ENCODE measurements at regions of chr9 and their contacts with region 1.

Region 1: DNA sequence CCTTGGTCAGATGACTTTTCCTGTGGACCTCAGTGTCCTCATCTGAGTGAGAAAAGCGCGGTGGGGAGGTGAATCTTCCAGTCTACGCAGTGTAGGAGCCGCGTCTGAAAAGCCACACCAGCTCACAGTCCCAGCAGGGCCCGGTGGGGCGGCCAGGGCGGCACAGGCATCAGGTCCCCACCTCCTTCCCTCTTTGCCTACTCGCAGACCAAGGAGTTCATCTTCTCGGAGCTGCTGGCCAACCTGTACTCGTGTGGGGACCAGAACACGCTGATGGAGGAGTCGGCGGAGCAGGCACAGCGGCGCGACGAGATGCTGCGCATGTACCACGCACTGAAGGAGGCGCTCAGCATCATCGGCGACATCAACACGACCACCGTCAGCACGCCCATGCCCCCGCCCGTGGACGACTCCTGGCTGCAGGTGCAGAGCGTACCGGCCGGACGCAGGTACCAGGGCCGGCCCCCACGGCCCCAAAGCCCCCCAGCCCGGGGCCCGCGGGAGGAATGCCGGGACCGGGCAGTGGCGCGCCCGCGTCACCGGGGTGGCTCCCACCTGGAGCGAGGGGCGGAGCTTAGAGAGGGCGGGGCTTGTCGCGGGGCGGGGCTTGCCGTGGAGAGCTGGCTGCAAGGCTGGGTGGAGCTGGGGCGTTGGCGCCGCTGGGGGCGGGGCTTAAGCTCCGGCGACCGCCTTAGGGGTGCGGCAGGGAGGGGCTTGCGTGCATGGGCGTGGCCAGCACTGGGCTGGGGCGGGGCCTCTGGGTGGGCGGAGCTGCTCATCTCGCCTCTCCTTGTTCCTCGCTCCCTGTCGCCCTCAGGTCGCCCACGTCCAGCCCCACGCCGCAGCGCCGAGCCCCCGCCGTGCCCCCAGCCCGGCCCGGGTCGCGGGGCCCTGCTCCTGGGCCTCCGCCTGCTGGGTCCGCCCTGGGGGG is 25.6 kb downstream of the GOLGA2 start:
- DNase-seq: peak; percentile 81 to 93
- ATAC-seq: peak; percentile 82 to 94 (median 90)
- H3K4me3 ChIP-seq: peak overlapping the region; percentile 44
- H3K27ac ChIP-seq: no peak overlapping the region
- H3K4me1 ChIP-seq: no peaks in the 10 kb centered on the region
- H3K27me3 ChIP-seq: peaks cover 0 to 21% (median 11%) of the 10 kb centered on the region in 3 donors
- CTCF ChIP-seq: no peak

Region 2: GRCh38 chr9:128191406-128192046 is 58.6 kb before region 1 on chr9 and contains the start of gene CIZ1:
- intact Hi-C with region 1: no loop called
- DNase-seq: peak; percentile 84 to 90
- ATAC-seq: peak; percentile 84 to 91 (median 88)
- H3K4me3 ChIP-seq: peak within 1 kb of the TSS; percentile 89
- H3K27ac ChIP-seq: peak within 1 kb of the TSS; percentile 90
- H3K4me1 ChIP-seq: peaks cover 16% of the 10 kb centered on the region
- H3K27me3 ChIP-seq: no peaks in the 10 kb centered on the region
- CTCF ChIP-seq: peak; percentile 74
- total RNA-seq, gene CIZ1: 86.0 to 119 (median 109) TPM

Region 3: GRCh38 chr9:128304149-128304974 is 54.2 kb after region 1 on chr9:
- intact Hi-C with region 1: loop called in 1 of 2 experiments (anchors 10 kb)
- DNase-seq: no peak
- ATAC-seq: no peak
- H3K4me3 ChIP-seq: no peak overlapping the region
- H3K27ac ChIP-seq: no peak overlapping the region
- H3K4me1 ChIP-seq: no peaks in the 10 kb centered on the region
- H3K27me3 ChIP-seq: no peaks in the 10 kb centered on the region
- CTCF ChIP-seq: no peak

Region 4: DNA sequence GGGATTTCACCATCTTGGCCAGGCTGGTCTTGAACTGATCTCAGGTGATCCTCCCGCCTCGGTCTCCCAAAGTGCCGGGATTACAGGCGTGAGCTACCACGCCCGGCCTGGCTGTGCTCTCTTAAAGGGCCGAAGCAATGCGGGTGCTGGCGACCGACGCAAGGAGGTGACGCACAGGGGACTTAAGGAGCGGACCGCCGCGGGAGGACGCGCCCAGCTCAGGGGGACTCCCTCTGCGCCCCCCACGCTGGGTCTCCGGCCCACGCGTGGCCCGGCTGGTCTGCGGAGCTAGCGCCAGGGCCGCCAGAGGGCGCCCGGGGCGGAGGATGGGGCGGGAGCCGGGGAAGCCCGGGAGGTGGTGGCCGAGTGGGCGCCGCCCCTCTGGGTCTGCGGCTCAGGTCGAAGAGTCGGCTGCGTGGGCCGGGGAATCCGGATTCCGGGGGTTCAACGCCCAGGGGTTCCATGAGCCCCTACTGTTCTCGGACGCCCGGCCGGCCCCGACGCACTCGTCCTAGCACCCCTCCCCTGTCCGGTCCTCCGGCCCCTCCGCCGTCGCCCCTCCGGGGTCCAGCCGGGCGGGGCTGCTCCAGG is 170.0 kb after region 1 on chr9:
- intact Hi-C with region 1: no loop called
- DNase-seq: peak; percentile 77 to 84
- ATAC-seq: peak; percentile 85 to 94 (median 88)
- H3K4me3 ChIP-seq: peak overlapping the region; percentile 81
- H3K27ac ChIP-seq: peak overlapping the region; percentile 25
- H3K4me1 ChIP-seq: peaks cover 12% of the 10 kb centered on the region
- H3K27me3 ChIP-seq: peaks cover 0 to 18% (median 6%) of the 10 kb centered on the region in 3 donors
- CTCF ChIP-seq: peak; percentile 82

Measured in psoas muscle (tissue), 8 donors.